ENCODE measurements at regions of chr17 and their contacts with region 1.

Region 1: GRCh38 chr17:48153691-48154358 is 46.3 kb downstream of the SNX11 start:
- DNase-seq: no peak
- H3K4me3 ChIP-seq: no peak overlapping the region
- H3K27ac ChIP-seq: no peak overlapping the region
- H3K4me1 ChIP-seq: peaks cover 0 to 11% (median 6%) of the 10 kb centered on the region in 6 donors
- H3K27me3 ChIP-seq: peaks cover 0 to 41% (median 15%) of the 10 kb centered on the region in 7 donors
- CTCF ChIP-seq: peak in 7 of 11 experiments; percentile 15 to 53 (median 43)
- POLR2A ChIP-seq: no peak

Region 2: GRCh38 chr17:48054238-48055185 is 99.3 kb before region 1 on chr17:
- intact Hi-C with region 1: no loop called
- DNase-seq: peak; percentile 75
- H3K4me3 ChIP-seq: peak overlapping the region in 7 of 8 donors; percentile 4 to 98 (median 36)
- H3K27ac ChIP-seq: peak overlapping the region in 6 of 8 donors; percentile 94 to 98 (median 96)
- H3K4me1 ChIP-seq: peaks cover 58 to 100% (median 86%) of the 10 kb centered on the region in 6 donors
- H3K27me3 ChIP-seq: no peaks in the 10 kb centered on the region
- CTCF ChIP-seq: no peak
- POLR2A ChIP-seq: no peak

Region 3: GRCh38 chr17:48282303-48282702 is 128.5 kb after region 1 on chr17:
- intact Hi-C with region 1: no loop called
- DNase-seq: no peak
- H3K4me3 ChIP-seq: no peak overlapping the region
- H3K27ac ChIP-seq: no peak overlapping the region
- H3K4me1 ChIP-seq: no peaks in the 10 kb centered on the region
- H3K27me3 ChIP-seq: peaks cover 0 to 9% (median 0%) of the 10 kb centered on the region in 7 donors
- CTCF ChIP-seq: no peak
- POLR2A ChIP-seq: no peak

Region 4: GRCh38 chr17:48618256-48618897 is 464.6 kb after region 1 on chr17:
- intact Hi-C with region 1: loop called (anchors 10 kb)
- DNase-seq: peak; percentile 96
- H3K4me3 ChIP-seq: no peak overlapping the region
- H3K27ac ChIP-seq: no peak overlapping the region
- H3K4me1 ChIP-seq: peaks cover 14 to 38% (median 29%) of the 10 kb centered on the region in 6 donors
- H3K27me3 ChIP-seq: peaks cover 26 to 100% (median 98%) of the 10 kb centered on the region in 7 donors
- CTCF ChIP-seq: peak; percentile 92 to 99 (median 96)
- POLR2A ChIP-seq: no peak

Measured in spleen (tissue), 13 donors.